ENCODE measurements at regions of chr2 and their contacts with region 1.

Region 1: DNA sequence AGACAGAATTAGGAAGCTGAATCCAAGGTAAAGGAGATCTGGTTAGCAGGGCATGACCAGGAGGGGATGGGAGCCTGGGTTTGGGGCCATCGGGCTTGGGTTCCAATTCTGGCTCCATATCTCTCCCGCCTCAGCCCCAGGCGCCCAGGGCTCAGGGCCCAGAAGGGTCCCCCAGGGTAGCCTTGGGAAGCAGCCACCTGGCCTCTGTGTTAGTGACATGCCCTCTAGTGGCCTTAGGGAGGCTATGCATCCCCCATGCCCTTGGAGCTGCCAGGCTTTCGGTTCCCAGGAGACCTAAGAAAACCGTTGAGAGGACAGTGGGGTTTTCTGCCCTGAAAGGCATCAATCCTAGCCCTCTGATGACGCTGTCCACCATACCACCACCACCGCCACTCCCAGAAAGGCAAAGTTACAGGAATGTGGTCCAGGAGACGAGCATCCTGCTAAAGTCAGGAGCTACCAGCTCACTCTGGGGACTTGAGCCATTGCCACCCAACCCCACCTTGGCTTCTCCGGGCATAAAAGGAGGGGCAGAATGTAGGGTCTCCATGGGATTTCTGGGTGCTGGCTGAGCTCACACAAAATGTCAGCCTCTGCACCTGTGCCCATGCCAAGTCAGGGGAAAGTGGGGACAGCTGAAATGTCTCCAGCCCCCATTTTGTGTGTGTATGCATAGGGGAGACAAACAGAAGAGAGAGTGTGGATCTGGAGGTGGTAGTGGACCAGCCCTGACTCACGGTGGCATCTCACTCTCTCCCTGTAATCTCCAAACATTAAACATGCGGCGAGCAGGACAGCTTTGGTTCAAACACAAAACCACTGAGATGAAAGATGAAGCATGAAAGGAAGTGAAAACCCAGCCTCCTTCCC is 56.5 kb downstream of the EMX1 start:
- DNase-seq: peak; percentile 64
- ATAC-seq: peak; percentile 92
- H3K4me3 Mint-ChIP-seq: no peak overlapping the region
- H3K27ac Mint-ChIP-seq: no peak overlapping the region
- H3K4me1 Mint-ChIP-seq: no peaks in the 10 kb centered on the region
- H3K27me3 Mint-ChIP-seq: peaks cover 7% of the 10 kb centered on the region

Region 2: DNA sequence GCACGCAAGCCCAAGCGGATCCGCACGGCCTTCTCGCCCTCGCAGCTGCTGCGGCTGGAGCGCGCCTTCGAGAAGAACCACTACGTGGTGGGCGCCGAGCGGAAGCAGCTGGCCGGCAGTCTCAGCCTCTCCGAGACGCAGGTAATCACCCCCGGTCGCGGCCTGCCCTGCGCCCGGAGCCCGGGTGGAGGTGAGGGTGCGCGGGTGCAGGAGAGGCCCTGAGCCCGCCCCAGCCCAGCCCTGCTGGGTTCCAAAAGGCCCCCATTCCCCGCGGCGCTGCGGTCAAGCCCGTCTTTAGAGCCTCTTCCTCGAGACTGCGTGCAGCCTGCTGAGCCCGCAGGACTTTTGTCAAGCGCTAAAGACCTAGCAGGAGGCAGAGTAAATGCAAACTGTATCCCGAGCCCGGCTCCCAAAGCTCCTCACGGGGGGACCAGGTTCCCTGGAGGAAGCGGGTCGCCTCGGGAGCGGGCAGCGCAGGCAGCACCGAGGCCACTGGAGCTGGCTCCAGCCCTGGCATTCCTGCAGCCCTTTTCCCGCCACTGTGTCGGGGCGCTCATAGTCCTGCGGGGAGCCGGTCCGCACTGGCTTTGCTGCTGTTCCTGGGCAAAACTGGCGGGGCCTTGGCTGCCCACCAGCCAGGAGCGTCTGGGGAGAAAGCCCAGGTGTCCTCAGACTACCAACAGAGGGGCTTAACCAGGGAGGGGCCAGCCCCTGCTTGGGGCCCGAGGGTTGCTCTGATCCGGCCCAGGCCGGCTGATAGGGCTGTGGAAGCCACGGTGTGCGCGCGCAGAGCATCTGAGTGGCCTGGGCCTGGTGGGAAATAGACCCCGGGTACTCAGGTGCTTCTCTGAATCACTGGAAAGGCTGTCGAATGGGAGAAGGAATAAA is 49.2 kb before region 1 on chr2:
- CTCF ChIA-PET with region 1: interaction called, 12 read pairs
- DNase-seq: peak; percentile 57
- ATAC-seq: peak; percentile 42
- H3K4me3 Mint-ChIP-seq: no peak overlapping the region
- H3K27ac Mint-ChIP-seq: no peak overlapping the region
- H3K4me1 Mint-ChIP-seq: peaks cover 14% of the 10 kb centered on the region
- H3K27me3 Mint-ChIP-seq: peaks cover 62% of the 10 kb centered on the region

Region 3: GRCh38 chr2:72934683-72935610 is 38.9 kb before region 1 on chr2:
- CTCF ChIA-PET with region 1: interaction called, 10 read pairs
- DNase-seq: no peak
- ATAC-seq: no peak
- H3K4me3 Mint-ChIP-seq: no peak overlapping the region
- H3K27ac Mint-ChIP-seq: no peak overlapping the region
- H3K4me1 Mint-ChIP-seq: peaks cover 16% of the 10 kb centered on the region
- H3K27me3 Mint-ChIP-seq: peaks cover 13% of the 10 kb centered on the region

Region 4: GRCh38 chr2:72953976-72954375 is 19.8 kb before region 1 on chr2:
- CTCF ChIA-PET with region 1: interaction called, 22 read pairs
- DNase-seq: peak; percentile 87
- ATAC-seq: peak; percentile 98
- H3K4me3 Mint-ChIP-seq: peak overlapping the region; percentile 86
- H3K27ac Mint-ChIP-seq: peak overlapping the region; percentile 90
- H3K4me1 Mint-ChIP-seq: peaks cover 28% of the 10 kb centered on the region
- H3K27me3 Mint-ChIP-seq: no peaks in the 10 kb centered on the region

Region 5: DNA sequence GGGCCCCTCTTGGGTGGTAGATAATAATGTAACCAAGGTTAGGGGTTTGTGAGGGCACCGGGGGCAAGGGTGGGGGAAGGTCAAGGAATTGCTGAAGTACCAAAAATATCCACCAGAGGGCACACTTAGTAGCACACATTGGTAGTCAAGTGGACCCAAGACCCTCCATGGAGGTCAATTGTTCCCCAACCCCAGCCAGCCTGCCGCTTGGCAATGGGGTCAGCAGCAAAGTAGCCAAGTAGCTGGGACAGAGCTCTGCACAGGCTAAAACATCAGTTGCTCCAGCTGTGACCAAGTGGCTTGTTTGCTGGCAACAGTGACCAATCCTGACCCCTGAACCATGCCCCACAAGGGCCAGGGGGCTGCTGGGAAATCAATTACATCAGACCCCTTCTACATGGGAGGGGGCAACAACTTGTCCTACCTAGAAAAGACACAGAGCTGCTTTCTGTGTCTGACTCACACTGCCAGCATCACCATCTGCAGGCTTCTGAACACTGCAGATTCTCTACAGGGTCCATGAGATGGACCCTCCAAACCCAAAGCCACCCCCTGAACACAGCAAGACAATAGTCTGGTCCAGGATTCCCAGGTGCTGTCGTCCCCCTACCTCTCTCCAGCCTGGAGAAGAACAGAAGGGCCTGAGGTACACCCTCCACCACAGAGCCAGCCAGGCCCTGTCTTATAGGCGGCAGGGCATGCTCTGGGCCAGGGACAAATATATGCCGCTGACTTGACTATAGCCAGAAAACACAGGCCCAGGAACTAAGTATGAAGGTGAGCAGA is 19.5 kb after region 1 on chr2:
- CTCF ChIA-PET with region 1: interaction called, 12 read pairs
- DNase-seq: peak; percentile 49
- ATAC-seq: peak; percentile 56
- H3K4me3 Mint-ChIP-seq: no peak overlapping the region
- H3K27ac Mint-ChIP-seq: no peak overlapping the region
- H3K4me1 Mint-ChIP-seq: no peaks in the 10 kb centered on the region
- H3K27me3 Mint-ChIP-seq: no peaks in the 10 kb centered on the region

Region 6: DNA sequence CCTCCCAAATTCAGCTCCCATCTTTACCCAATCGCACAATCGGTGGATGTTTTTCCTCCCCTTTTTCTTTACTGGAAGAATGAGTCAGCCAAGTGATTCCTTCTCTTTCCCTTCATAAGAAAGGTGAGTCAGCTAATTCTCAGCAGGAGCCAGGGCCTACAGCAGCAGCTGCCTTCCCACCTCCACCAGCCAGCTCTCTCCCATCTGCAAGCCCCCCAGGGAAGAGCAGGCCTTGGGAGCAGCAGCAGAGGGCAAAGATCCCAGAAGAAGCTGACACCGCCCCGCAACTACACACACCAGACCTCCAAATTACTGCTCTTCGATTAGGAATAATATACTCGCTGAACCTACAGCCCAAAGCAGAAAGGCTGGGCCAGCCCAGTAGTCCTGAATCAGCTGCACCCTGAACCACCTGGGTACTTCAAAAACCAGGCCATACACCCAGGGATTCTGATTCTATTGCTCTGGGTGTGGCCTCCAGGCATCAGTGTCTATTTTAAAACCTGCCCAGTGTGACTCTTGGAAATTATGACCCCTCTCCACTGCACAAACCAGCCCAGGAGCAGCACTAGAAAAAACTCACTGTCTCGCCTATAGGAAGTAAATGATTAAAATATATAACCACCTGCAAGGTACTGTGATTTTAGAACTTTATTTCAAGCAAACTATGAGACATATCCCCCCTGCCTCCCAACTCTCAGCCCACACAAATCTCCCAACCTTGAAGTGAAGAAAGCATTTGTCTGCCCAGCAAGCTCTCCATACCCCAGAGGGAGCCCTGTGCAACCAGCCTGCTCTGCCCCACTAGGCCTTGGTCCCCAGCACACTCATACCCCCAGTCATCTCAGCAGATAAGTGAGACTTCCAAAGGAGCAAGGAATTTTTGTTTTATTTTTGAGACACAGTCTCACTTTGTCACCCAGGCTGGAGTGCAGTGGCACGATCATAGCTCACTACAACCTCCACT is 90.4 kb after region 1 on chr2:
- CTCF ChIA-PET with region 1: interaction called, 10 read pairs
- DNase-seq: no peak
- ATAC-seq: no peak
- H3K4me3 Mint-ChIP-seq: no peak overlapping the region
- H3K27ac Mint-ChIP-seq: no peak overlapping the region
- H3K4me1 Mint-ChIP-seq: peaks cover 14% of the 10 kb centered on the region
- H3K27me3 Mint-ChIP-seq: no peaks in the 10 kb centered on the region